A673 (cell line): ENCODE measurements at regions of chr11 and their contacts with region 1.

Region 1: DNA sequence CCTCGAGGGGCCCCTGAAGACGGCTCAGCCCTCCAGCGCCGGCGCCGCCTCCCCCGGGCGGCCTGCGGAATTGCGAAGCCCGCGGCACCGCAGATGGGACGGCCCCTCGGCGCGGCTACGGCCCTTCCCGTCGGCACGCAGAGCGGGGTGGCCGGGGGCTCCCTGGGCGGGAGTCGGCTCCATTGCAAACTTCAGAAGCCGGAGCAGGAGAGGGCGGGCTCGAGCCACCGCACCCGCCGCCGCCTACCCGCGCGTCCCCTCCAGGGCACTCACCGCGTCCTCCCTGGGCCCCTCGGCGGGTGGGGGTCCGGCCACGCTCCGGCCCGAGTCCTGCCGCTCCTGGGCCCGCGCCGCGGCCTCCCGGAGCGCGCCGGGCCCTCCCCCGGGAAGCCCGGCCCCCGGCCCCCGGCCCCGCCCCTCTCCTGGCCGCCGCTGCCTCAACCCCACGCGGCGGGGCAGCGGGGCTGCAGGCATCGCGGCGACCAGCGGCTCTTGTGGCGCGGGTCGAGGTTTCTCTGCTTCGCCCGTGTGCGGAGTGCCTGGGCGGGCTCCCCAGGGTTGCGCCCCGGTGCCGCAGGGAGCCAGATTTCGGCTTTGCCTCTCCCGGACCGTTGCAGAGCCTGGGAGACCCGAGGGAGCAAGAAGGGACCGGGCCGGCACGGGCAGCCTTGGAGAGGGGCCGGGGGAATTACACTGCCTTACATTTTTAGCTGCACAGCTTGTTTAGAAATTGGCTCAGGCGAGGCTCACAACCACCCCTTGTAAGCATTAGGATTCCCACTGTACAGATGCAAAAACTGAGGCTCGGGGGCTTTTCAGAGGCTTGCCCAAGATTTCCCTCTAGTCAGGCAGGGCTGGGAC is at the start of gene PACSIN3:
- DNase-seq: peak; percentile 78
- H3K4me3 ChIP-seq: peak within 1 kb of the TSS; percentile 58
- H3K27ac ChIP-seq: peak within 1 kb of the TSS; percentile 41
- H3K4me1 ChIP-seq: peaks cover 24% of the 10 kb centered on the region
- H3K27me3 ChIP-seq: no peaks in the 10 kb centered on the region
- CTCF ChIP-seq: 0 out of 2 replicates have a peak, but pooled peaks have one; percentile 15
- total RNA-seq, gene PACSIN3: 32.0 and 50.9 TPM in 2 replicates

Region 2: GRCh38 chr11:46808799-46809431 is 377.4 kb before region 1 on chr11:
- CTCF ChIA-PET with region 1: no interaction called
- POLR2A ChIA-PET with region 1: no interaction called
- intact Hi-C with region 1: no loop called
- DNase-seq: peak; percentile 87
- H3K4me3 ChIP-seq: no peak overlapping the region
- H3K27ac ChIP-seq: no peak overlapping the region
- H3K4me1 ChIP-seq: no peaks in the 10 kb centered on the region
- H3K27me3 ChIP-seq: no peaks in the 10 kb centered on the region
- CTCF ChIP-seq: peak; percentile 82

Region 3: GRCh38 chr11:46876471-46876870 is 309.8 kb before region 1 on chr11:
- CTCF ChIA-PET with region 1: no interaction called
- POLR2A ChIA-PET with region 1: no interaction called
- intact Hi-C with region 1: no loop called
- DNase-seq: no peak
- H3K4me3 ChIP-seq: no peak overlapping the region
- H3K27ac ChIP-seq: no peak overlapping the region
- H3K4me1 ChIP-seq: no peaks in the 10 kb centered on the region
- H3K27me3 ChIP-seq: no peaks in the 10 kb centered on the region
- CTCF ChIP-seq: no peak

Region 4: GRCh38 chr11:47213985-47214564 is 27.8 kb after region 1 on chr11:
- CTCF ChIA-PET with region 1: interaction called, 3 read pairs
- POLR2A ChIA-PET with region 1: interaction called, 6 read pairs
- intact Hi-C with region 1: loop called (anchors 2 kb)
- DNase-seq: peak; percentile 99
- H3K4me3 ChIP-seq: peak overlapping the region; percentile 62
- H3K27ac ChIP-seq: peak overlapping the region; percentile 86
- H3K4me1 ChIP-seq: peaks cover 16% of the 10 kb centered on the region
- H3K27me3 ChIP-seq: no peaks in the 10 kb centered on the region
- CTCF ChIP-seq: no peak

Region 5: DNA sequence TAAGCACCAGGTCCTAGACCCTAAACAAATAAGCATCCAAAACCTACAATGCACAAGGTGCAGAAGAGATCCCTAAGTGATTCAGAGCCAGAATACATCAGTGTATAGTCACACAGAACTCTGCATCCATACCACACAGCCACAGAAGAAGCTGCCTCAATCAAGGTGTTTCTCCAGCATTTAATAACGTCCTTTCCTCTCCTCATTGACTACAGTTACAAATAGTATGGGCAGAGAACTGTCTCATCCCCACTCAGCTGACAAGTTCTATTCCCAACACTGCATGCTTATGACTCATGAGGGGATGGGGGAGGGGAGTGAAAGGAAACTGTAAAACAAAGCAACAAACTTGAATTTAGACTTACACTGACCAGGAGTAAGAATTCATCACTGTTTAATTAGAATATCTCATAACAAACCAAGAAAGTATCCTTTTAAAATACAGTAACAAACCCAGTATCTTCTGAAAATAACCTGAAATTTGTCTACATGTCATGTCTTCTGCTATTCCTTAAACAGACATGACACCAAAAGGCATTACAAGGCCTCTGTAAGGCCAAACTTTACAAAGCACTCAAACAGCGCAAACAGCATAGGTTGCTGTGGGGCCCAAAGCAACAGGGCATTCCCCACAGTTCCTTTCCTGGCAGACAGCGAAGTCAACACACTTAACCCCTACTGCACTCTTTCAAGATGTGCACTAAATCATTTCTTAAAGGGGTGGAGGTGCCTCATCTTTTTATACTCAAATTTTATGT is 337.3 kb after region 1 on chr11:
- CTCF ChIA-PET with region 1: no interaction called
- POLR2A ChIA-PET with region 1: no interaction called
- intact Hi-C with region 1: no loop called
- DNase-seq: peak; percentile 86
- H3K4me3 ChIP-seq: no peak overlapping the region
- H3K27ac ChIP-seq: peak overlapping the region; percentile 46
- H3K4me1 ChIP-seq: peaks cover 36% of the 10 kb centered on the region
- H3K27me3 ChIP-seq: no peaks in the 10 kb centered on the region
- CTCF ChIP-seq: no peak